Activated T-helper 2 cell treated with anti-CD3 and anti-CD28 coated beads, Interferon-gamma antibody, Interleukin-2, Interleukin-4, amounts not matched to agents 10 μg/mL and 5 μg/mL and 100 μg/mL, durations not matched to agents 14 hours and 24 hours and 36 hours (primary cell): ENCODE measurements at regions of chr14 and their contacts with region 1.

Region 1: DNA sequence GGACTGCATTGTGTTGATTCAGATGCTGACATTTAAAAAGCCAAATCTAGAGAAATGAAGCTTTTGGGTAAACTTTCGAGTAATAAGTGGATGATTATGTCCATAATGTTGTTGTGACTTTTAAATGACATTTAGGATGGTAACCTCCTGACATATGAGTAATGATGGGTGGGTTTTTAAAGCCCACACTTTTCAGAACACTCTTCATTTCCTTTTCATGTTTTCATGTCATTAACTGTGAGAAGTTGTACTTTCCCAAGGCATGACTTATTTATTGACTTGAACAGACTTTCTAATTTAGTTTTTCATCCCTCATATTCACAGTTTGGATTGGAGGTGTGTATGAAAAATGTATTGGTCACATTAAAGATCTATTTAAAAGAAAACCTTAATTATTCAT is 35.5 kb downstream of the RGS6 start:
- DNase-seq: no peak
- H3K4me3 Mint-ChIP-seq: peak overlapping the region; percentile 3
- H3K27ac Mint-ChIP-seq: peak overlapping the region; percentile 88
- H3K4me1 Mint-ChIP-seq: peaks cover 26% of the 10 kb centered on the region
- H3K27me3 Mint-ChIP-seq: peaks cover 14% of the 10 kb centered on the region

Region 2: DNA sequence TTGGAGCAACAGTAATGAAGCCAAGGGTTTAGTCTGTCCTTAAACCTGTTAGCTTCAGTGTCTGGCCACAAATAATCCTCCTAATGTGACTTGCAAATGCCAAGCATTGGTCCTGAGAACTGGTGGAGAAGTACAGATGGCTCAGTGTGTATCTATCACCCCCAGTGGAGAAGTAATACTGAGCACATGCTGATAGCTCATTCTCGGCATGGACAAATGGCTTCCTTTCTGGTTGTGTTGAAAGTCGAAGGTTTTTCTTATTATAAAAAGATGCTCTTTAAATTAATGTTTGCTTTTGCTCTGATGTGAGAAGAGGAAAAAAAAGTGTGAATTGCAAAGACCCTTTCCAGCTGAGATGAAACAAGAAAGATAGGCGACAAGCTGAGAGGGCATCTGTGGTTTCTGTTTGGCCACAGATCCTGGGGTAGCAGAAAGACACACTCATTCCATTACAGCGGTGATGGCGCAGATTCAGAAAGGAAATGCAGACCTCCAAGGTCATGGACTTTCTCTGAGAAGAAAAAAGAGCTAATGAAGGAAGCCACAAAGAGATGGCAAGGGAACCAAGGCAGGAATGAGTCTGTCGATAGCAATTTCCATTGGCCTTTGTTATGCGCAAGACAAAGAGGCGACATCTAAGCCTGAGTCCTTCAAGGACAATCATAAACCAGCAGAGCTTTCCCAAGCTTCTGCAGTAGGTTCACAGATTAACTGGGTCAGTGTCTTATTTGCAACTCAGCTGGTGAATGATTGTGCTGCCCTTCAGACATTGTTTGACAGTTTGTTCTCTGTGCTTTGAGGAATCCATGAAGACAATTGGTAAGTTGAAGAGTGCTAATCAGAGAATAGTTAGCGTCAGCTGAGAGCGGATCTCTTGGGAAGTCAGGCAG is 191.0 kb before region 1 on chr14:
- intact Hi-C with region 1: loop called (anchors 1 kb)
- DNase-seq: no peak
- H3K4me3 Mint-ChIP-seq: no peak overlapping the region
- H3K27ac Mint-ChIP-seq: peak overlapping the region; percentile 28
- H3K4me1 Mint-ChIP-seq: peaks cover 17% of the 10 kb centered on the region
- H3K27me3 Mint-ChIP-seq: peaks cover 19% of the 10 kb centered on the region

Region 3: GRCh38 chr14:71932220-71932981 is 35.3 kb before region 1 on chr14 and contains the start of gene RGS6:
- intact Hi-C with region 1: loop called (anchors 1 kb)
- DNase-seq: peak; percentile 10
- H3K4me3 Mint-ChIP-seq: peak within 1 kb of the TSS; percentile 74
- H3K27ac Mint-ChIP-seq: peak within 1 kb of the TSS; percentile 80
- H3K4me1 Mint-ChIP-seq: peaks cover 15% of the 10 kb centered on the region
- H3K27me3 Mint-ChIP-seq: peaks cover 55% of the 10 kb centered on the region
- total RNA-seq, gene RGS6: 2.8 and 3.7 TPM in 2 replicates

Region 4: GRCh38 chr14:72000907-72001306 is 33.2 kb after region 1 on chr14:
- intact Hi-C with region 1: loop called (anchors 1 kb)
- DNase-seq: no peak
- H3K4me3 Mint-ChIP-seq: no peak overlapping the region
- H3K27ac Mint-ChIP-seq: no peak overlapping the region
- H3K4me1 Mint-ChIP-seq: peaks cover 1% of the 10 kb centered on the region
- H3K27me3 Mint-ChIP-seq: peaks cover 2% of the 10 kb centered on the region

Region 5: GRCh38 chr14:72040528-72040927 is 72.8 kb after region 1 on chr14:
- intact Hi-C with region 1: no loop called
- DNase-seq: no peak
- H3K4me3 Mint-ChIP-seq: no peak overlapping the region
- H3K27ac Mint-ChIP-seq: no peak overlapping the region
- H3K4me1 Mint-ChIP-seq: peaks cover 3% of the 10 kb centered on the region
- H3K27me3 Mint-ChIP-seq: peaks cover 40% of the 10 kb centered on the region

Region 6: GRCh38 chr14:72142328-72142727 is 174.6 kb after region 1 on chr14:
- intact Hi-C with region 1: no loop called
- DNase-seq: no peak
- H3K4me3 Mint-ChIP-seq: no peak overlapping the region
- H3K27ac Mint-ChIP-seq: no peak overlapping the region
- H3K4me1 Mint-ChIP-seq: no peaks in the 10 kb centered on the region
- H3K27me3 Mint-ChIP-seq: peaks cover 20% of the 10 kb centered on the region

Region 7: GRCh38 chr14:72476657-72477499 is 509.2 kb after region 1 on chr14:
- intact Hi-C with region 1: loop called (anchors 5 kb)
- DNase-seq: peak; percentile 80
- H3K4me3 Mint-ChIP-seq: peak overlapping the region; percentile 35
- H3K27ac Mint-ChIP-seq: peak overlapping the region; percentile 73
- H3K4me1 Mint-ChIP-seq: peaks cover 69% of the 10 kb centered on the region
- H3K27me3 Mint-ChIP-seq: peaks cover 5% of the 10 kb centered on the region